ENCODE measurements at regions of chr2 and their contacts with region 1.

Region 1: DNA sequence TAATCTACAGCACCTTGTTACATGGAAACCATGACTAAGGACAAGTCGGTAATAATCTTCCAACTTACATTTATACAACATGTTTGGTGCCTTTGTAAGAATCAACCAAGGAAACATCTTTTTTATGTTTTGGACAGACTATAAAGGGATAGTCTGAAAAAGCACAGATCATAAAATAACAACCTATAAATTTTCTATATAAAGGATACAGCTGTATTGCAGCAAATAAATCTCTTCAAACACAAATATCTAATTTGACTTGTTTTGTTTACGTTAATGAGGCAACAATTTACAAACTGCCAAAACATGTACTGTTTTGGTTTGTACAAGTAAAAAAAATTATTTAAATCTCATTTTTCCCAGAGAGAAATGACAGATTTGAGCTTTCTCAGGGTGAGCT is 92.5 kb downstream of the SRBD1 start:
- DNase-seq: no peak
- H3K4me3 ChIP-seq: no peak overlapping the region
- H3K27ac ChIP-seq: no peak overlapping the region
- H3K4me1 ChIP-seq: no peaks in the 10 kb centered on the region
- H3K27me3 ChIP-seq: no peaks in the 10 kb centered on the region
- CTCF ChIP-seq: no peak

Region 2: GRCh38 chr2:45637440-45637839 is 118.9 kb after region 1 on chr2:
- CTCF ChIA-PET with region 1: no interaction called
- POLR2A ChIA-PET with region 1: no interaction called
- intact Hi-C with region 1: no loop called
- DNase-seq: no peak
- H3K4me3 ChIP-seq: no peak overlapping the region
- H3K27ac ChIP-seq: no peak overlapping the region
- H3K4me1 ChIP-seq: no peaks in the 10 kb centered on the region
- H3K27me3 ChIP-seq: no peaks in the 10 kb centered on the region
- CTCF ChIP-seq: no peak

Region 3: DNA sequence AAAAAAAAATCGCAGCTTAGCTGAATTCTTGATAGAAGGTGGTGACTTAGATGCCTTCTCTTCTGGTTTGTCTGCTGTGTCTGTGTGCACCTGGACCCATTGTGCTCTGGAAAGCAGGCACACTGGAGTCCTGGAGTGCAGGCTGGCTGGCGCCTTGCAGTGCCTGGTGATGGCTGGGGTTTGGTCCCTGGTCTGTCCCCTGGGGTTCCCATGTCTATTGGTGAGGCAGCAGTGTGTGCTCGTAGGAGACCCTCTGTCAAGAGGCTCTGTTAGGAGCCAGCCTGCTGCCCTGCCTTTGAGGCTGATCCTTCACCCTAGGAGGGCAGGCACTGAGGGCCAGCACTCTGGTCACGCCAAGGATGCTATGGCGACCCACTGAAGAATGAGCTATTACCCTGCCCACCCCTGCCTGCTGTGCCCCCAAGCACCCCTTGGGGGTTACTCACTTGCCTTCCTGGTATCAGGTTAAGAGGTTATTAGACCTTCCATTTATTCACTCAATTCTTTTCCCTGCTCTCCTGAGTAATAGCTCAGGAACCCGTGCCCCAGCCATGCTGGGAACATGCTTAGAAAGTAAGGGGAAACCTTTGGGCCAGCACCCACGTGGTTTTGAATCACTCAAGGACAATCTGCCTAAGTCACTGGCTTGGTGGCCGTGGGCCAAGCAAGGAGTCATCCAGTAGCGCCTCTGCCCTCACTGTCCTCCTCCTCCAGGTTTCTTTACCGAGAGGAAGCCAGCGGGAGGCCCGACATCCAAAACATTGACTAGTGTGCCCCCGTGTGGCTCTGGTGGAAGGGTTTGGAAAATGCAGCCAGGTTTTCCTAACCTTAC is 417.5 kb after region 1 on chr2:
- CTCF ChIA-PET with region 1: no interaction called
- POLR2A ChIA-PET with region 1: no interaction called
- intact Hi-C with region 1: no loop called
- DNase-seq: peak; percentile 94 to 99
- H3K4me3 ChIP-seq: no peak overlapping the region
- H3K27ac ChIP-seq: peak overlapping the region; percentile 55
- H3K4me1 ChIP-seq: peaks cover 44% of the 10 kb centered on the region
- H3K27me3 ChIP-seq: no peaks in the 10 kb centered on the region
- CTCF ChIP-seq: peak; percentile 93

Region 4: DNA sequence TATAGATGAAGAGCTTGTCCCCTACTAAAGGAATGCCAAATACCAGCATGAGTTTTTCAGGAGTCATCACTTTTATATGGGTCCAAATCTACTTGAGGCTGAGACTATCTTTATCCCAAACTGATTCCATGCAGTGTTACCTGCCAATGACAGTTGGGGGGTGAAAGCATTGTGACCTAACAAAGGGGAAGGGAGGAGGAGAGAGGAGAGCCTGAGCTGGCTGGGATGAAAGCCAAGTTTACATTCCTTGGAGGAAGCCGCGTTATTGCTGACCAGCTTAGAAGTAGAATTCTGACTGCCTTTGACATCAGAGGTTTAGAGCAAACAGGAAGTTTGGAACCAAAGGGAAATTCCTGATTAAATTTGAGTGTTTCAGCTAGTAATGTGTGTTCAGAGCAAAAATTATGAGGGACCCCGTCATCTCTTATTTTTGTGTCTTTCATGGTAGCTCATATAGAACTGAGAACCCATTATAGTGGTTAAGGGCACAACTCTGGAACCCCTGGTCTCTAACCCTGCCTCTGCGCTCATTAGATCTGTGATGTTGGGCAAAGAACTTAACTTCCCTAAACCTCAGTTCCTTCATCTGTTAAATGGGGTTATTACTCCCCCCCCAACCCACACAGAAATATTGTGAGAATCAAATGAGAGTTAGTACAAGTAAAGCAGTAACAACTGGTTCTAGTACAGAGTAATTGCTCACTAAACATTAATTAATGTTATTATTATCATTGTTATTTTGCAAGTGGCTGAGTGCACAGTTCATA is 579.4 kb after region 1 on chr2:
- CTCF ChIA-PET with region 1: interaction called, 18 read pairs
- POLR2A ChIA-PET with region 1: no interaction called
- intact Hi-C with region 1: no loop called
- DNase-seq: peak; percentile 79 to 95
- H3K4me3 ChIP-seq: 0 out of 2 replicates have a peak overlapping the region, but pooled peaks have one; percentile 7
- H3K27ac ChIP-seq: peak overlapping the region; percentile 93
- H3K4me1 ChIP-seq: peaks cover 26% of the 10 kb centered on the region
- H3K27me3 ChIP-seq: no peaks in the 10 kb centered on the region
- CTCF ChIP-seq: no peak

Measured in PC-9 (cell line).